ENCODE measurements at regions of chr3 and their contacts with region 1.

Region 1: DNA sequence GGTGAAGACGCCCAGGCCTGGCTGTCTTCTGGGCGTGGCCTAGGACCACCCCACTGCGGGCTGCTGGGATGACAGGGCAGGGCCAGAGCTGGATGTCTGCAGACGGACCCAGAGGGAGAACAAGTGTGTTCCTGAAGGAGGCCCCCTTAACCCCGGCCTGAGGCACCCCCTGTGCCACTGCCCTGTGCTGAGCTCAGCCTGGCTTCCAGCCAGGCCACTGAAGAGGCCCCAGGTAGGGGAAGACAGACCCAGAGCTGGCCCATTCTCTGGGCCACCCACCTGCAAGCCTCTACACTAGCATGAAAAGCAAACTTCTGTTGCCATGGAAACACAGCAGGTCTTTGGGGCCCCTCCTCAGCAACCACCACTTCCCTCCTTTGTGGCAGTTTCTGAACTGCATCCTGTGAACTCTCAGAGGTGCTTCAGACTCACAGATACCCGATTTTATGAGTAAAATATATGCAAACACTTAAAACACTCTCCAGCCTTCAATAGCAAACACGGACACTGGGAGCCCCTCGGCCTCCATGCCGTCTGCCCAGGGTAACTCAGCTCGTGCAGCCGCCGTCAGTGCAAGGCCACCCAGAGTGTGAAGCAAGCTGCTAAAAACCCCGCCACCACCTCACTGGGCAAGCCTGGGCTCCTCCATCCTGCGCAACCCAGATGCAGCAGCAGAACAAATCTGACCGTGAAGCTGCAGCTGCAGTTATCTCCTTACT is 42.5 kb downstream of the CMTM6 start:
- DNase-seq: peak; percentile 58 to 97 (median 73)
- ATAC-seq: peak; percentile 73
- H3K4me3 ChIP-seq: peak overlapping the region; percentile 39
- H3K4me3 Mint-ChIP-seq: peak overlapping the region; percentile 76
- H3K27ac ChIP-seq: peak overlapping the region; percentile 90 to 97
- H3K27ac Mint-ChIP-seq: no peak overlapping the region
- H3K4me1 ChIP-seq: peaks cover 83% of the 10 kb centered on the region
- H3K4me1 Mint-ChIP-seq: peaks cover 33% of the 10 kb centered on the region
- H3K27me3 ChIP-seq: no peaks in the 10 kb centered on the region
- H3K27me3 Mint-ChIP-seq: no peaks in the 10 kb centered on the region
- CTCF ChIP-seq: no peak

Region 2: DNA sequence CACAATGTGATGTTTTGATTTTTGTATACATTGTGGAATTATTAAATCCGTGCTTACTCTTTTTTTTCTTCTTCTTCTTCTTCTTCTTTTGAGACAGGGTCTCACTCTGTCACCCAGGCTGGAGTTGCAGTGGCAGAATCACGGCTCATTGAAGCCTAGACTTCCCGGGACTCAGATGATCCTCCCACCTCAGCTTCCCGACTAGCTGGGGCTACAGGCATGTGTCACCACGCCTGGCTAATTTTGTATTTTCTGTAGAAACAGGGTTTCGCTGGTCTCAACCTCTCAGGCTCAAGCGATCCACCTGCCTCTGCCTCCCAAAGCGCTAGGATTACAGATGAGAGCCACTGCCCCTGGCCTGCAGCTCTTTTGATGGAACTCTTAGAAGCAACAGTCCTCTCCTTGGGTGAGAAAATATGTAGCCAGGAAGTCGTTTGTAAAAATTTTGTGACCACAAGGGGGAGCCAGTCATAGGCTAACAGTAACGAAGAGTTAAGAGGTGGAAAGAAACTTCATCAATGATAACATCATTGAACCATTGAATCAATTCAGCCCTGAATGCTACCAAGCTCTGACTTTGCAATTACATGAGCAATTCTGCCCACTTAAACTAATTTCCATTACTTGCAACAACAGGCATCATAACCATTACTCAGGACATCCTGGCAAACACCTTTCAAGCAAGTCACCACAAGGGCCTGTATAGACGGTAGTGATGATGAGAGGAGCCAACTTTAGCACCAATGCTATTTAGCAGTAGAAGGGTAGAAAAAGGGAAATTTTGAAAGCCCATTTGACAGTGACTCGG is 85.2 kb before region 1 on chr3:
- CTCF ChIA-PET with region 1: interaction called, 4 read pairs
- POLR2A ChIA-PET with region 1: interaction called, 29 read pairs
- intact Hi-C with region 1: no loop called
- DNase-seq: peak in 13 of 14 experiments; percentile 17 to 89 (median 62)
- ATAC-seq: peak; percentile 33
- H3K4me3 ChIP-seq: no peak overlapping the region
- H3K4me3 Mint-ChIP-seq: no peak overlapping the region
- H3K27ac ChIP-seq: no peak overlapping the region
- H3K27ac Mint-ChIP-seq: peak overlapping the region; percentile 76
- H3K4me1 ChIP-seq: peaks cover 32% of the 10 kb centered on the region
- H3K4me1 Mint-ChIP-seq: peaks cover 40% of the 10 kb centered on the region
- H3K27me3 ChIP-seq: no peaks in the 10 kb centered on the region
- H3K27me3 Mint-ChIP-seq: no peaks in the 10 kb centered on the region
- CTCF ChIP-seq: peak; percentile 75

Region 3: GRCh38 chr3:32414520-32415202 is 45.5 kb before region 1 on chr3:
- CTCF ChIA-PET with region 1: interaction called, 4 read pairs
- POLR2A ChIA-PET with region 1: interaction called, 28 read pairs
- intact Hi-C with region 1: loop called in 1 of 2 experiments (anchors 1 kb)
- DNase-seq: peak in 10 of 14 experiments; percentile 34 to 86 (median 52)
- ATAC-seq: peak; percentile 95
- H3K4me3 ChIP-seq: no peak overlapping the region
- H3K4me3 Mint-ChIP-seq: peak overlapping the region; percentile 43
- H3K27ac ChIP-seq: peak overlapping the region; percentile 39 to 76
- H3K27ac Mint-ChIP-seq: peak overlapping the region; percentile 95
- H3K4me1 ChIP-seq: peaks cover 41% of the 10 kb centered on the region
- H3K4me1 Mint-ChIP-seq: peaks cover 83% of the 10 kb centered on the region
- H3K27me3 ChIP-seq: no peaks in the 10 kb centered on the region
- H3K27me3 Mint-ChIP-seq: no peaks in the 10 kb centered on the region
- CTCF ChIP-seq: no peak

Region 4: DNA sequence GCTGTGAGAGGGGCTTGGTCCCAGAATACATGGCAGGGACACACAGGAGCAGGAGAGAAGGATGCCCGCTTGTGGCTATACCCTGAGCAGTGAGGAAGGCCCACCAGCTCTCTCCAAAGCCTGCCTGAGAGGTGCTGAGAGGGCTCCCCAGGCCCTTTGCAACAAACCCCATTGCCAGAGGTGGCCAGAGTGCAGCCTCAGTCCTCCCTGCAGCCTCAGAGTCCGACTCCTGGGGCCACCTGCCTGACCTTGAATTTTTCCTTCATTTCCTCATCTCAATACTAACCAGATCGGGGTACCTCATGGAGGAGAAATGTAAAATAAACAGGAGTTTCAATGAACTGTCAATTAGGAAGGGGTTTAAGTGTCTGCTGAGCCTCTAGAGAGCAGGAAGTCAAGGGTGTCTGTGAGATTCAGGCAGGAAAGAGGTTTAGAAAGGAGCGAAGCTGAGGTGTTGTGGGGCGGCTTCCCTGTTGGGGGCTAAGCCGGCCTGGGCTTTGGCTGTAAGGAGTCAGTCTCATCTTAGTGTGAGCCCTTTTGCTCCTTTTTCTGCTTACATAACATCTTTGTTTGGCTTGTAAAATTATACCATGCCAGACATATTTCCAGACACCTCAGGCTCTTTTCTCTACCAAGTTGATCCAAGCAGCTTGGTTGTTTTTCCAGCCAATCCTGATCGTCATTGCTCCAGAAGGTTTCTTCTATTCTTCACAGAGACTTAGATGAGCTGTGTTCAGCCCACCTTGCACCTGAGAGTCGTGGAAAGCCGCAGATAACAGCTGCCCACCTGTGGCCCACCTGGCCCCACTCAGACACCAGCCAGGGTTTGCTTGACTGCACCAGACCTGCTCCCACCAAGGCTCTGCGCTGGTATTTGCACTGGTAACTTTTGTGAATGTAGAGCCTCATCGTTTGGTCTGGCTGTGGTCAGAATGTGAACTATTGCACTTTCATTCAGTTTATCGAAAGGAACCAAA is 31.8 kb before region 1 on chr3:
- CTCF ChIA-PET with region 1: interaction called, 6 read pairs
- POLR2A ChIA-PET with region 1: interaction called, 50 read pairs
- intact Hi-C with region 1: loop called (anchors 2 to 5 kb)
- DNase-seq: peak in 12 of 14 experiments; percentile 18 to 81 (median 43)
- ATAC-seq: peak; percentile 58
- H3K4me3 ChIP-seq: peak overlapping the region; percentile 29
- H3K4me3 Mint-ChIP-seq: peak overlapping the region; percentile 80
- H3K27ac ChIP-seq: peak overlapping the region; percentile 73 to 83
- H3K27ac Mint-ChIP-seq: peak overlapping the region; percentile 95
- H3K4me1 ChIP-seq: peaks cover 81% of the 10 kb centered on the region
- H3K4me1 Mint-ChIP-seq: peaks cover 90% of the 10 kb centered on the region
- H3K27me3 ChIP-seq: no peaks in the 10 kb centered on the region
- H3K27me3 Mint-ChIP-seq: no peaks in the 10 kb centered on the region
- CTCF ChIP-seq: no peak

Region 5: DNA sequence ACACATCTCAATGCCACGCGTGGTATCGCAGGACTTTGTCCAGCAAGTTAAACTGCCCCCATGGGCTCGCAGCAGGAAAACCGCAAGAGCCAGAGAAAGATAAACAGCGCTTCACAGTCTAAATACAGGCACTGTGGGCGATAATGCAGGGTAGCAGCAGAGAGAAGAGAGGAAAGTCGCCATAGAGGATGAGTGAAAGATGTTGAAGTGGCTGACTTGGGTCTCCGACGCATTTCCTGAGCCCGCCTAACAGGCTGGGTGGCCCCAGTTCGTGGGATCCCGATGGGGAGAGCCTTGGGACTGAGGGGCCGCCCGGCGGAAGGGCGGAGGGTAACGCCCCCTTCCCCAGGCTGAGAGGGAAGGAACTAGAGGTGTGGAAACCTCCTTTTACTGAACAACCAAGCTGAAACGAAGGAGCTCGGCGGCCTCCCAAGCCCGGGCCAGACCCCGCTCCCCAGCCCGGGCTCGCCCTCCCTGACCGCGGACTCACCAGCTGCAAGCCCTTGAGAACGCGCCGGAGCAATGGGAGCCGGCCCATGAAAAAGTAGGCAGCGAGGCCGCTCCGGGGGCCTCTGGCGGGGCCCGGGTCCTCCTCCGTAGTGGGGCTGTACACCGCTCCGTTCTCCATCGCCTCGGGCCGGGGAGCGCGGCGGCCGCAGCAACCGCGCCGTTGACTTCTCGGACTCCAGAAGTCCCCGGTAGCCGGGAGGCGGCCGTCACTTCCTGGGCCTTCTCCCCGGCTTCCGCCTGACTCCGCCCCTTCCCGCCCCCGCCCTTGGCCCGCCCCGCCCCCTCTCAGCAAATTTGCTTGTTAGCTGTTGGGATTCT is 42.1 kb after region 1 on chr3 and contains the start of gene CMTM6:
- CTCF ChIA-PET with region 1: interaction called, 3 read pairs
- POLR2A ChIA-PET with region 1: interaction called, 3 read pairs
- intact Hi-C with region 1: loop called in 1 of 2 experiments (anchors 5 kb)
- DNase-seq: peak; percentile 54 to 90 (median 67)
- ATAC-seq: peak; percentile 78
- H3K4me3 ChIP-seq: peak within 1 kb of the TSS; percentile 79
- H3K4me3 Mint-ChIP-seq: peak within 1 kb of the TSS; percentile 92
- H3K27ac ChIP-seq: peak within 1 kb of the TSS; percentile 88 to 92
- H3K27ac Mint-ChIP-seq: peak within 1 kb of the TSS; percentile 83
- H3K4me1 ChIP-seq: peaks cover 15% of the 10 kb centered on the region
- H3K4me1 Mint-ChIP-seq: peaks cover 43% of the 10 kb centered on the region
- H3K27me3 ChIP-seq: no peaks in the 10 kb centered on the region
- H3K27me3 Mint-ChIP-seq: no peaks in the 10 kb centered on the region
- CTCF ChIP-seq: no peak
- total RNA-seq, gene CMTM6: 36.5 to 37.8 TPM

Measured in CD4-positive, alpha-beta T cell (primary cell).